ENCODE measurements at regions of chr1 and their contacts with region 1.

Region 1: GRCh38 chr1:113042285-113043143 is 30.5 kb upstream of the LRIG2 start:
- DNase-seq: peak; percentile 86
- ATAC-seq: peak; percentile 94

Region 2: DNA sequence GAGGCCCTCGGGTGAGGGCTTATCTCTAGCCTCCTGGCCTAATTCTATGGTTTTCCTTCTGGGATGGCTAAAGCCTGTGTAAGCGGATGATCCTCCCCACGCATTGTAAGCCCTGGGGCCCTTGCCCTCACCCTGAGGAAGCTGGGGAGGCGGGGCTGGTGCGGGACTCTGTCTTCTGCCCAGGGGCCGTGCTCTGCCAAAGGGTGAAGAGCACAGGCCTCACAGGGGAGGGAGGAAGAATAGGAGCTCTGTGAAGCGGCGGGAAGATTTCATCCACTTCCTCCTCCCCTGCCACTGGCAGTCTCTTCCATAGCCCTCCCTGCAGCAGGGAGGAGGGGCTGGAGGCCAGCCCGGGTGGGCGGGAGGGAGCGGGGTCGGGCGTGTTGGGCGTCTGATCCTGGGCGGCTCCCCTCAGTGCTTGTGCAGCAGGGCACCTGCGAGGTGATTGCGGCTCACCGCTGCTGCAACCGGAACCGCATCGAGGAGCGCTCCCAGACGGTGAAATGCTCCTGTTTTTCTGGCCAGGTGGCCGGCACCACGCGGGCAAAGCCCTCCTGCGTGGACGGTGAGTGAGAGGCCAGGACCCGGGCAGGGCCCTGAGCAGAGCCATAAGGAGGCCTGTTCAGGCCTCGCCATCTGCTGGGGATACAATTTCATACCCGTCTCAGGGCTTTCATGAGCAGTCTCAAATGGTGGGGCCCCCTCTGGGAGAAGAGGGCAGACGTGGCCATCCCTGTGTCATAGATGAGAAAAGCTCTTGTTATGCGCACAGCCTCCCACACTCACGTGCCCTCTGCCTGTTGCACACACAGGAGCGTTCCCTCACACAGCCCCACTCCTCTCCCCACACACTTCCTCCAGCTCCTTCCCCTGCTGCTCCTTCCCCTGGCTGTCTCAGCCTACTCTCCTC is 319.7 kb before region 1 on chr1:
- intact Hi-C with region 1: loop called (anchors 10 kb)
- DNase-seq: no peak
- ATAC-seq: peak; percentile 81

Region 3: DNA sequence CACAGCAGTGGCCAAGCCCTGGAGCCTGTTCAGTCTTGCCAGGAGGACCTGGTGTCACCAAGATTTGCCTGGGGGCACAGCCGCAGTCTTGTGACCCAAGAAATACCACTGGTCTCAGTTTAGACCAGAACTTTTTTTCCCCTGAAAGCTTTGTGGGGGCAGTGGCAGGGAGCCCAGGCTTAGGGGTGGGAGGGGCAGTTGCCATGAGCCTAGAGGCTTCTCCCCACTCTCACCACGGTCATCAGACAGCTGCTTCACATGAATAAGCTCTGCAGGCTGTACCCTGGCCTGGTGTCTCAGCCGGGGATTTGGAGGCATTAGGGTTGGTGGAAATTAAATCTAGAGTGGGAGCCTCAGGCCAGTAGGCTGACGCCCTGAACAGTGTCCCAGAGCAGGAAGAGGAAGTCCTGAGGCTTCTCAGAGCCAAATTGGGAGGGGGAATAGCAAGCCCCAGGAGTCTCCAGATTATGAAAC is 160.2 kb before region 1 on chr1:
- intact Hi-C with region 1: loop called (anchors 10 kb)
- DNase-seq: no peak
- ATAC-seq: peak; percentile 49

Region 4: GRCh38 chr1:114002492-114003239 is 960.2 kb after region 1 on chr1:
- intact Hi-C with region 1: no loop called
- DNase-seq: no peak
- ATAC-seq: peak; percentile 82